ENCODE measurements at regions of chr3 and their contacts with region 1.

Region 1: GRCh38 chr3:192090586-192090985 is 629.6 kb downstream of the PYDC2 start:
- DNase-seq: no peak
- H3K4me3 ChIP-seq: no peak overlapping the region
- H3K27ac ChIP-seq: no peak overlapping the region
- H3K4me1 ChIP-seq: no peaks in the 10 kb centered on the region
- H3K27me3 ChIP-seq: no peaks in the 10 kb centered on the region
- CTCF ChIP-seq: no peak

Region 2: GRCh38 chr3:190120269-190121060 is 1970.1 kb before region 1 on chr3 and contains the start of gene P3H2:
- CTCF ChIA-PET with region 1: no interaction called
- POLR2A ChIA-PET with region 1: no interaction called
- intact Hi-C with region 1: no loop called
- DNase-seq: peak; percentile 96
- H3K4me3 ChIP-seq: peak within 1 kb of the TSS; percentile 85
- H3K27ac ChIP-seq: peak within 1 kb of the TSS; percentile 53
- H3K4me1 ChIP-seq: peaks cover 4% of the 10 kb centered on the region
- H3K27me3 ChIP-seq: no peaks in the 10 kb centered on the region
- CTCF ChIP-seq: peak; percentile 70
- total RNA-seq, gene P3H2: 19.6 and 21.7 TPM in 2 replicates

Region 3: GRCh38 chr3:192168065-192168601 is 77.5 kb after region 1 on chr3:
- CTCF ChIA-PET with region 1: no interaction called
- POLR2A ChIA-PET with region 1: interaction called, 17 read pairs
- intact Hi-C with region 1: no loop called
- DNase-seq: no peak
- H3K4me3 ChIP-seq: no peak overlapping the region
- H3K27ac ChIP-seq: no peak overlapping the region
- H3K4me1 ChIP-seq: no peaks in the 10 kb centered on the region
- H3K27me3 ChIP-seq: no peaks in the 10 kb centered on the region
- CTCF ChIP-seq: no peak

Measured in A673 (cell line).